PC-9 (cell line): ENCODE measurements at regions of chrX and their contacts with region 1.

Region 1: DNA sequence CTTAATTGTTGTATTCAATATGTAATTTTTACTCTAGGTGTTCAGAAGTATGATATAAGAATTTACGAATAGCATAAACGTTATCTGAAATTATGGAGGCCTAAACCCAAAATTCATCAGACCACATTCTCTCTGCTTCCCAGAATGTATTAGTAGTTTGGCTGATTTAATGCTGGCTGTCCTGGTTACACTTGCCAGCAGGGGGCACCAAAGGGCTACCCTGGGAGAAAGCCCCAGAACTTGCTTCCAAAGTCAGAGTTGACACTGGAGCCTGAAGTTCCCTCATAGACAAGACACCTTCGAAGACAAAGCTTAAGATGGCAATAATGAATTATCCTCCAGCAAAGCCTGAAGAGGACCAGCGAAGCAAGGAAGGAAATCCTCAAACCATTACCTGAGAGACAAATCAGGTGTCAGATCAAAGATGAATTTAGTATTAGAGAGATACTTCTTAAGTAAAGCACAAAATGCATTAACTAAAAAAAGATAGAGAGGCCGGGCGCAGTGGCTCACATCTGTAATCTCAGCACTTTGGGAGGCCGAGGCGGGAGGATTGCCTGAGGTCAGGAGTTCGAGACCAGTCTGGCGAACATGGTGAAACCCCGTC is 11.3 kb upstream of the ANOS1 start:
- DNase-seq: peak; percentile 40 to 57
- H3K4me3 ChIP-seq: no peak overlapping the region
- H3K27ac ChIP-seq: no peak overlapping the region
- H3K4me1 ChIP-seq: no peaks in the 10 kb centered on the region
- H3K27me3 ChIP-seq: no peaks in the 10 kb centered on the region
- CTCF ChIP-seq: peak; percentile 86

Region 2: GRCh38 chrX:8179656-8180055 is 563.6 kb before region 1 on chrX:
- CTCF ChIA-PET with region 1: no interaction called
- POLR2A ChIA-PET with region 1: no interaction called
- intact Hi-C with region 1: loop called (anchors 1 kb)
- DNase-seq: no peak
- H3K4me3 ChIP-seq: no peak overlapping the region
- H3K27ac ChIP-seq: no peak overlapping the region
- H3K4me1 ChIP-seq: no peaks in the 10 kb centered on the region
- H3K27me3 ChIP-seq: no peaks in the 10 kb centered on the region
- CTCF ChIP-seq: peak; percentile 61

Region 3: GRCh38 chrX:8815464-8816065 is 72.3 kb after region 1 on chrX:
- CTCF ChIA-PET with region 1: no interaction called
- POLR2A ChIA-PET with region 1: no interaction called
- intact Hi-C with region 1: loop called (anchors 2 kb)
- DNase-seq: peak in 1 of 2 experiments; percentile 34
- H3K4me3 ChIP-seq: no peak overlapping the region
- H3K27ac ChIP-seq: no peak overlapping the region
- H3K4me1 ChIP-seq: no peaks in the 10 kb centered on the region
- H3K27me3 ChIP-seq: no peaks in the 10 kb centered on the region
- CTCF ChIP-seq: peak; percentile 85

Region 4: DNA sequence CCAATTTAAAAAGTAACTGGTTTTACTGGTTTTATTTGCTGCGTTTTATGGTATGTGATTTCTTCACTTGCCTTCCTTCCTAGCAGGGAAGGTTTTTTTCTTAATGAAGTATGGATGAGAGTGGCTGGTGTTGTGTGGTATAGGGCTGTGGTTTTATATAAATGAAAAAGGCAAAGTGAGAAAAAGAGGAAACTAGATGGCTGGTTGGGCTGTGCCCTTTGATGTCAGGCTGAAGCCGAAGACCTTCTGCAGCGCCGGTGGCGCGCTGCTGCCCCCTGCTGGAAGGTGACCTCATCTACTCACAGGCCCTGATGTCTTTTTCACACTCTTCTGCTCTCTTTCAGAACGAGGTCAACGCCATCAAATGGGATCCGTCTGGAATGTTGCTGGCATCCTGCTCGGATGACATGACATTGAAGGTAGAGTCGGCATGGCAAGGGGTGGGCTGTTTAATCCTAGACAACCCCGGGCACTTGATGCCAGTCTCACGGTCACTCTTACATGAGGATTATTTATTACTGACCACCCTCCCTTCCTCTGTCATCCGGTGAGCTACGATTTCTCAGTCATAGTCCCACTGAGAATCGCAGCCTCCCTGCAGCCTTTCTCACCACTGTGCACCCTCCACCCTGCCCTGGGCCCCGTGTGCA is 965.8 kb after region 1 on chrX:
- CTCF ChIA-PET with region 1: no interaction called
- POLR2A ChIA-PET with region 1: no interaction called
- intact Hi-C with region 1: loop called (anchors 10 kb)
- DNase-seq: peak; percentile 58 to 72
- H3K4me3 ChIP-seq: no peak overlapping the region
- H3K27ac ChIP-seq: 0 out of 2 replicates have a peak overlapping the region, but pooled peaks have one; percentile 12
- H3K4me1 ChIP-seq: peaks cover 13% of the 10 kb centered on the region
- H3K27me3 ChIP-seq: no peaks in the 10 kb centered on the region
- CTCF ChIP-seq: peak; percentile 84